CD4-positive, alpha-beta T cell (primary cell): ENCODE measurements at regions of chr1 and their contacts with region 1.

Region 1: DNA sequence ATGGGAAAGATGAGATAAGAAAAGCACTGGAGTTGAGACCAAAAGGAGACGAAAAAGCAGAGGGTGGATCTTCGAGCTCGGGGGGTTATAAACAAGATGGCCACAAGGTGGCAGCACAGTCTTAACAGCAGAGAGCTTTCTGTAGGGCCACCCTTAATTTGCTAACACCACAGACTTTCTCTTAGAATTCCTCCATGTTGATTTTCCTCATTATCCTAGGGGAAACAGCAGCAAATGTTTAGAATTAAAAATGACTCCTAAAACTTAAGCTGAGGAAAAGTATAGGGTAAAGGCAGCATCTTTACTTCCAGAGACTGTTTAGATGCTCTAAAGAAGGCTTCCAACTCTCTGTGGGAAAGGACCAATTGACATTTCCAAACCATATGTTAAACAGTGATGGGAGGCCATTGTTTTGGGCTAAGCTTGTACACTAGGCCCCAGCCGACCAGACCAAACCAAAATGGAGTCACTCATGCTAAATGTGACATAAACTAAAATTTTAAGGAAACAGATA is 2.5 kb upstream of the APOBEC4 start:
- DNase-seq: peak; percentile 50 to 87 (median 70)
- ATAC-seq: peak; percentile 70
- H3K4me3 ChIP-seq: no peak overlapping the region
- H3K4me3 Mint-ChIP-seq: no peak overlapping the region
- H3K27ac ChIP-seq: no peak overlapping the region
- H3K27ac Mint-ChIP-seq: no peak overlapping the region
- H3K4me1 ChIP-seq: peaks cover 28% of the 10 kb centered on the region
- H3K4me1 Mint-ChIP-seq: peaks cover 40% of the 10 kb centered on the region
- H3K27me3 ChIP-seq: no peaks in the 10 kb centered on the region
- H3K27me3 Mint-ChIP-seq: no peaks in the 10 kb centered on the region
- CTCF ChIP-seq: peak; percentile 85

Region 2: DNA sequence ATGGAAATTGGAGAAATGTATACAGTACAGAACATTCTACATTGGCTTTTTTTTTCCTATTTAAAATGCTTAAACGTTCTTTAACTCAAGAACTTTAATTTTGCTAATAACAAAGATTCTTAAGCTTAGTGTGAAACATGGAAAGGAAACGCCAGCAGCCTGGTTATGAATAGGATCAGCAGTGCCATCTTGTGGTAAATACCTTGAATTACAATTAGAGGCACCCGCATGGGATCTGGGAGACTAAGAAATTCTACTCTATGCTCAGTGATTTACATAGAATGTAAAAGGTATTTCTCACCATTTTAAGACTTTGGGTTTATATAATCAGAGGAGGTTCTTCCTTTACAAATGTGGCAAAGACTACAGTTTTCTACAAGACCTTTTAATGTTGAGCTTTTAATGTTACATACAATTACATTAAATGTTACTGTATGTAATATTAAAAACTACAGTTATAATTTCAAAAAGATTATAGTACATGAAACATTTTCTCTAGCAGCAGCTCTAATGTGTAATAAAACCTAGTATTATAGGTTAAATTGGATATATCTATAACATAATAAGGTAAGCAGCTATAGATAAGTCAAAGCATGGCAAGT is 29.6 kb after region 1 on chr1:
- CTCF ChIA-PET with region 1: interaction called, 16 read pairs
- POLR2A ChIA-PET with region 1: interaction called, 5 read pairs
- intact Hi-C with region 1: loop called in 1 of 2 experiments (anchors 5 kb)
- DNase-seq: peak in 7 of 14 experiments; percentile 2 to 73 (median 30)
- ATAC-seq: peak; percentile 60
- H3K4me3 ChIP-seq: no peak overlapping the region
- H3K4me3 Mint-ChIP-seq: no peak overlapping the region
- H3K27ac ChIP-seq: no peak overlapping the region
- H3K27ac Mint-ChIP-seq: no peak overlapping the region
- H3K4me1 ChIP-seq: no peaks in the 10 kb centered on the region
- H3K4me1 Mint-ChIP-seq: no peaks in the 10 kb centered on the region
- H3K27me3 ChIP-seq: no peaks in the 10 kb centered on the region
- H3K27me3 Mint-ChIP-seq: no peaks in the 10 kb centered on the region
- CTCF ChIP-seq: peak; percentile 85